ENCODE measurements at regions of chr11 and their contacts with region 1.

Region 1: DNA sequence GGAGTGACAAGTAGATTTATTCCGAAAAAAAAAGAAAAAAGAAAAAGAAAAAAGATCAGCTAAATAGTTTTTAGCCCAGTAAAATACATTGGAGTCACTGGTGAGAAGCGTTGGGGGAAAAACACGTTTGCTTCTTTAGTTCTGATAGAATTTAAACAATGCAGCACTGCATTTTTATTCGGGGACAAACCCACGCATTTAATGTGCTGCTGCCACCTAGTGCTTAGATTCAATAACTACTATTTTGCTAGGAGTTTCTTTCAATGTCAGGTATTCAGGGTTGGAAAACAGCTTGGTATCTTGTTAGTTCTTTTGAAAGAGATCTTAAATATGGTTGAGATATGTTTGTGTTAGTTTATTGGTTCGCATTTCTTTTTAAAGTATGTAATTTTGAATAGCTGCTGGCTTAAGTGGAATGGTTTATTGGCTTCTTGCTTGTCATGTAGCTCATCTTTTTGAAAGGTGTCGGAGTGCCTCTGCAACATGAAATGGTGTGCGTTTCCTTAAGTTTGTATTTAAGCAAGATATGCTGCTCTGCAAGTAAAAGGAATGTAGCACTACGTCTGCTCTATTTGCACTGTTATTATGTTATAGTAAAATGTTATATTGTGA is 41.9 kb downstream of the SVIP start:
- DNase-seq: no peak
- H3K4me3 ChIP-seq: no peak overlapping the region
- H3K27ac ChIP-seq: no peak overlapping the region
- H3K4me1 ChIP-seq: no peaks in the 10 kb centered on the region
- H3K27me3 ChIP-seq: no peaks in the 10 kb centered on the region
- CTCF ChIP-seq: peak; percentile 19 to 62 (median 60)

Region 2: DNA sequence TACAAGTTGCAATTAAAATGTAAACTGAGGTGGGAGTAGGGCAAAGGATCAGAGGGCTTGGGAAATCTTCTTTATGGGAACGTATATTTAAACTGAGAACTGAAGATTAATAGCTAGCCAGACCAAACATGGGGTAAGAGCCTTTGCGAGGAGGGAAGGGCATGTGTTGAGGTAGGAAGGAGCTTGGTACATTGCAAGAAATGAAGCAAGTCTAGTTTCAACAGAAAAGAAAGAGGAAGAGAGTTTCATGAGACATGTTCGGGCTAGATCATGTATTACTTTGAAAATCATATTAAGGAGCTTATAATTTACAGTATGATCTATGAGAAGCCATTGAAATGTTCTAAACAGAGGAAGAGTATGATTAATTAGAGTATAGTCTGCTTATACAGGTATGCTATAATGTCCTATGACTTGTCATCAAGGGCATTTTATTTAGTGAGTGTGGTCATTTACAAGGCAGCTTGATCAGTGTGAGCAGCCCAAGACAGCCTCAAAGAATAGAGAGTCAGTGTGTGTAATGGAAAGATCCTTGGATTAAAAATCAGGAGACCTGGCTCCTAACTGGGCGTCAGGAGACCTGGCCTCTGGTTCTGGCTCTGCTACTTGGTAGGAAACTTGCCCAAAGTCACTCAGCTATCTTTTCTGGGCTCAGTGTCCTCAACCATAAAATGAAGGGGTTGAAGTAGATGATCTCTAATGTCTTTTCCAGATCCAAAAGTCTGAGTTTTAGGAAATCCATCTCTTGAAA is 110.3 kb before region 1 on chr11:
- dilution Hi-C with region 1: loop called (anchors 25 kb)
- DNase-seq: no peak
- H3K4me3 ChIP-seq: no peak overlapping the region
- H3K27ac ChIP-seq: no peak overlapping the region
- H3K4me1 ChIP-seq: no peaks in the 10 kb centered on the region
- H3K27me3 ChIP-seq: no peaks in the 10 kb centered on the region
- CTCF ChIP-seq: no peak

Region 3: DNA sequence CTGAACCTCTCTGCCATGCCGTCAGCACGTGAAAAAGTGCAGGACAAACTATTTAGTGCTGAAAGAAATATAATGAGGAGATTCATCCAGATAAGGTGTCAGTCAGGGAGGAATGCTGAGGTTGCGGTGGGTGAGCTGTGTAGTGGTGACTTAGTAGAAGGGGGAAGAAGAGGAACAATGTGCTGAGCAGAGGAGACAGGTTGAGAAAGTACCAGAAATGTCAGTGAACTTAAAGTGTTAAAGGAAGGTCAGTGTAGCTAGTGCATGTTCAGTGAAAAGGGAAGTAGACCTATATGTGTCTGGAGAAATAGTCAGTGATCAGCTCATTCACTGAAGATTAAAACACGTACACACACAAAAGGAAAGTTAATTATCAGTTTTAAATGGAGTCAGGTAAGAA is 310.2 kb after region 1 on chr11:
- dilution Hi-C with region 1: no loop called
- DNase-seq: no peak
- H3K4me3 ChIP-seq: no peak overlapping the region
- H3K27ac ChIP-seq: no peak overlapping the region
- H3K4me1 ChIP-seq: no peaks in the 10 kb centered on the region
- H3K27me3 ChIP-seq: no peaks in the 10 kb centered on the region
- CTCF ChIP-seq: no peak

Measured in keratinocyte (primary cell).